Panc1 (cell line): ENCODE measurements at regions of chr1 and their contacts with region 1.

Region 1: GRCh38 chr1:20255666-20256065 is 35.0 kb upstream of the VWA5B1 start:
- DNase-seq: no peak
- ATAC-seq: peak; percentile 39
- H3K4me3 ChIP-seq: no peak overlapping the region
- H3K27ac ChIP-seq: no peak overlapping the region
- H3K4me1 ChIP-seq: peaks cover 1% of the 10 kb centered on the region; the same call in 1 of the 2 replicates
- H3K27me3 ChIP-seq: no peaks in the 10 kb centered on the region; the same call in 1 of the 2 replicates
- CTCF ChIP-seq: no peak

Region 2: GRCh38 chr1:18653916-18654315 is 1601.8 kb before region 1 on chr1:
- CTCF ChIA-PET with region 1: interaction called, 10 read pairs
- POLR2A ChIA-PET with region 1: no interaction called
- in situ Hi-C with region 1: no loop called
- intact Hi-C with region 1: no loop called
- DNase-seq: no peak
- ATAC-seq: no peak
- H3K4me3 ChIP-seq: no peak overlapping the region
- H3K27ac ChIP-seq: no peak overlapping the region
- H3K4me1 ChIP-seq: no peaks in the 10 kb centered on the region
- H3K27me3 ChIP-seq: peaks cover 13% of the 10 kb centered on the region; the same call in 1 of the 2 replicates
- CTCF ChIP-seq: no peak

Region 3: GRCh38 chr1:20343149-20343937 is 87.7 kb after region 1 on chr1:
- CTCF ChIA-PET with region 1: no interaction called
- POLR2A ChIA-PET with region 1: no interaction called
- in situ Hi-C with region 1: no loop called
- intact Hi-C with region 1: no loop called
- DNase-seq: no peak
- ATAC-seq: no peak
- H3K4me3 ChIP-seq: no peak overlapping the region
- H3K27ac ChIP-seq: no peak overlapping the region
- H3K4me1 ChIP-seq: no peaks in the 10 kb centered on the region
- H3K27me3 ChIP-seq: no peaks in the 10 kb centered on the region; the same call in 1 of the 2 replicates
- CTCF ChIP-seq: no peak

Region 4: GRCh38 chr1:20400341-20401177 is 144.9 kb after region 1 on chr1:
- CTCF ChIA-PET with region 1: interaction called, 13 read pairs
- POLR2A ChIA-PET with region 1: no interaction called
- in situ Hi-C with region 1: no loop called
- intact Hi-C with region 1: no loop called
- DNase-seq: no peak
- ATAC-seq: no peak
- H3K4me3 ChIP-seq: no peak overlapping the region
- H3K27ac ChIP-seq: no peak overlapping the region
- H3K4me1 ChIP-seq: no peaks in the 10 kb centered on the region
- H3K27me3 ChIP-seq: peaks cover 8% of the 10 kb centered on the region
- CTCF ChIP-seq: no peak